Mammary epithelial cell (primary cell): ENCODE measurements at regions of chr3 and their contacts with region 1.

Region 1: GRCh38 chr3:10619989-10620832 is 114.8 kb upstream of the ATP2B2 start:
- DNase-seq: no peak
- H3K4me3 ChIP-seq: no peak overlapping the region
- H3K27ac ChIP-seq: no peak overlapping the region
- H3K4me1 ChIP-seq: no peaks in the 10 kb centered on the region
- H3K27me3 ChIP-seq: no peaks in the 10 kb centered on the region
- CTCF ChIP-seq: no peak

Region 2: GRCh38 chr3:10518506-10519150 is 101.6 kb before region 1 on chr3:
- CTCF ChIA-PET with region 1: no interaction called
- dilution Hi-C with region 1: loop called (anchors 5 kb)
- in situ Hi-C with region 1: no loop called
- intact Hi-C with region 1: no loop called
- DNase-seq: no peak
- H3K4me3 ChIP-seq: no peak overlapping the region
- H3K27ac ChIP-seq: no peak overlapping the region
- H3K4me1 ChIP-seq: no peaks in the 10 kb centered on the region
- H3K27me3 ChIP-seq: peaks cover 6% of the 10 kb centered on the region
- CTCF ChIP-seq: no peak

Region 3: GRCh38 chr3:10557781-10558373 is 62.3 kb before region 1 on chr3:
- CTCF ChIA-PET with region 1: no interaction called
- dilution Hi-C with region 1: loop called (anchors 5 kb)
- in situ Hi-C with region 1: no loop called
- intact Hi-C with region 1: no loop called
- DNase-seq: peak; percentile 67
- H3K4me3 ChIP-seq: no peak overlapping the region
- H3K27ac ChIP-seq: no peak overlapping the region
- H3K4me1 ChIP-seq: peaks cover 8% of the 10 kb centered on the region
- H3K27me3 ChIP-seq: no peaks in the 10 kb centered on the region
- CTCF ChIP-seq: no peak

Region 4: DNA sequence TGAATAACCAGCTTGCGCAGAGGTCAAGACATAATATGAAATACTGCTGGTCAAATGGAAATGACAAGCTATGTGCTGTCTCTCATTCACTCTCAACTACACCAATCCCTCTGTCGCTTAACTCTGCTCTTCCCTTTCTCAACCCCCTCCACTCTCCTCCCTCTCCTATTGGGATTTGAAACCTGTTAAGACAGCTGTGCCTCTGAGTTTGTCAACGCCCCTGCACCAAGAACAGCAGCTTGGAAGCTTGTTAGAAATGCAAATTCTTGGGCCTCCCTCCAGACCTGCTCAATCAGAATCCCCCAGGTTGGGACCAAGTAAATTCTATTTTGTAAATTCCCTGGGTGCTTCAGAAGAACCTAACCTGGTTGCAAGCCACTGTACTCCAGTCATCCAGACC is 34.9 kb after region 1 on chr3:
- CTCF ChIA-PET with region 1: no interaction called
- dilution Hi-C with region 1: loop called (anchors 5 kb)
- in situ Hi-C with region 1: no loop called
- intact Hi-C with region 1: no loop called
- DNase-seq: no peak
- H3K4me3 ChIP-seq: no peak overlapping the region
- H3K27ac ChIP-seq: no peak overlapping the region
- H3K4me1 ChIP-seq: no peaks in the 10 kb centered on the region
- H3K27me3 ChIP-seq: peaks cover 2% of the 10 kb centered on the region
- CTCF ChIP-seq: no peak